ENCODE measurements at regions of chr9 and their contacts with region 1.

Region 1: DNA sequence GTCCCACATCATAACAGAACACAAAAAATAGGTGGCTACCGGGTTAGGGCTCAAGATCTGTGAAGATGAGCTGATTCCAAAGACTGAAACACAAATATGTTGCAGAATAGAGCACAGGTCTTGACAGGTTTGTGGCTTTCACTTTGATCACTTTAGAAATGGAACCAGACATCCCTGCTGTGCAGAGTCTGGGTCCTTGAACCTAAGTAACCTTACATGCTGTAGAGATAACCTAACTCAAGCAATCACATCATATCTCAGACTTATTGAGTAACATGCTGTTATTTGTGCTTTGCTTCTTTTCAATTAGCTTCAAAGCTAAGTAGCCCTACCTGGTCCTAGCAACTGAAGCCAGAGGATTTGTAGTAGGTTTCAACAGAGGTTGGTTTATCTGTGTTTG is 24.3 kb downstream of the FBXW2 start:
- DNase-seq: peak in 1 of 2 experiments; percentile 38
- H3K4me3 ChIP-seq: no peak overlapping the region
- H3K4me3 Mint-ChIP-seq: no peak overlapping the region
- H3K27ac Mint-ChIP-seq: no peak overlapping the region
- H3K4me1 ChIP-seq: peaks cover 42% of the 10 kb centered on the region
- H3K4me1 Mint-ChIP-seq: peaks cover 33% of the 10 kb centered on the region
- H3K27me3 ChIP-seq: no peaks in the 10 kb centered on the region
- H3K27me3 Mint-ChIP-seq: no peaks in the 10 kb centered on the region
- CTCF ChIP-seq: no peak

Region 2: GRCh38 chr9:120730661-120731514 is 38.0 kb before region 1 on chr9:
- CTCF ChIA-PET with region 1: no interaction called
- POLR2A ChIA-PET with region 1: no interaction called
- intact Hi-C with region 1: no loop called
- DNase-seq: peak; percentile 49 to 79
- H3K4me3 ChIP-seq: no peak overlapping the region
- H3K4me3 Mint-ChIP-seq: no peak overlapping the region
- H3K27ac Mint-ChIP-seq: no peak overlapping the region
- H3K4me1 ChIP-seq: peaks cover 15% of the 10 kb centered on the region
- H3K4me1 Mint-ChIP-seq: no peaks in the 10 kb centered on the region
- H3K27me3 ChIP-seq: no peaks in the 10 kb centered on the region
- H3K27me3 Mint-ChIP-seq: no peaks in the 10 kb centered on the region
- CTCF ChIP-seq: no peak

Region 3: GRCh38 chr9:120783602-120784047 is 14.7 kb after region 1 on chr9:
- CTCF ChIA-PET with region 1: interaction called, 3 read pairs
- POLR2A ChIA-PET with region 1: no interaction called
- intact Hi-C with region 1: loop called (anchors 1 kb)
- DNase-seq: no peak
- H3K4me3 ChIP-seq: no peak overlapping the region
- H3K4me3 Mint-ChIP-seq: no peak overlapping the region
- H3K27ac Mint-ChIP-seq: no peak overlapping the region
- H3K4me1 ChIP-seq: peaks cover 7% of the 10 kb centered on the region
- H3K4me1 Mint-ChIP-seq: peaks cover 12% of the 10 kb centered on the region
- H3K27me3 ChIP-seq: no peaks in the 10 kb centered on the region
- H3K27me3 Mint-ChIP-seq: no peaks in the 10 kb centered on the region
- CTCF ChIP-seq: no peak

Region 4: GRCh38 chr9:120792898-120793765 is 24.2 kb after region 1 on chr9 and contains the start of gene FBXW2:
- CTCF ChIA-PET with region 1: no interaction called
- POLR2A ChIA-PET with region 1: interaction called, 11 read pairs
- intact Hi-C with region 1: loop called (anchors 1 kb)
- DNase-seq: peak; percentile 94
- H3K4me3 ChIP-seq: peak within 1 kb of the TSS; percentile 58
- H3K4me3 Mint-ChIP-seq: peak within 1 kb of the TSS; percentile 86
- H3K27ac Mint-ChIP-seq: peak within 1 kb of the TSS; percentile 90
- H3K4me1 ChIP-seq: peaks cover 10% of the 10 kb centered on the region
- H3K4me1 Mint-ChIP-seq: peaks cover 9% of the 10 kb centered on the region
- H3K27me3 ChIP-seq: no peaks in the 10 kb centered on the region
- H3K27me3 Mint-ChIP-seq: no peaks in the 10 kb centered on the region
- CTCF ChIP-seq: no peak
- total RNA-seq, gene FBXW2: 72.7 and 74.3 TPM in 2 replicates

Region 5: DNA sequence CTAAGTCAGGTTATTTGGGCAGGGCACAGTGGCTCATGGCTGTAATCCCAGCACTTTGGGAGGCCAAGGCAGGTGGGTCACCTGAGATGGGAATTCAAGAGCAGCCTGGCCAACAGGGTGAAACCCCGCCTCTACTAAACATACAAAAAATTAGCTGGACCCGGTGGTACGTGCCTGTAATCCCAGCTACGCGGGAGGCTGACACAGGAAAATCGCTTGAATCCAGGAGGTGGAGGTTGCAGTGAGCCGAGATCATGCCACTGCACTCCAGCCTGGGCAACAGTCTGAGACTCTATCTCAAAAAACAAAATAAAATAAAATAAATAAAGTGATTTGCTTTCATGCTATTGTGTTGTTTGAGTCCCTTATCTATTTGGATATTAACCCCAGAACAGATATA is 32.6 kb after region 1 on chr9:
- CTCF ChIA-PET with region 1: no interaction called
- POLR2A ChIA-PET with region 1: interaction called, 3 read pairs
- intact Hi-C with region 1: loop called (anchors 1 kb)
- DNase-seq: peak; percentile 61 to 67
- H3K4me3 ChIP-seq: no peak overlapping the region
- H3K4me3 Mint-ChIP-seq: peak overlapping the region; percentile 10
- H3K27ac Mint-ChIP-seq: no peak overlapping the region
- H3K4me1 ChIP-seq: peaks cover 20% of the 10 kb centered on the region
- H3K4me1 Mint-ChIP-seq: peaks cover 9% of the 10 kb centered on the region
- H3K27me3 ChIP-seq: no peaks in the 10 kb centered on the region
- H3K27me3 Mint-ChIP-seq: no peaks in the 10 kb centered on the region
- CTCF ChIP-seq: no peak